Spleen (tissue), 13 donors: ENCODE measurements at regions of chr1 and their contacts with region 1.

Region 1: DNA sequence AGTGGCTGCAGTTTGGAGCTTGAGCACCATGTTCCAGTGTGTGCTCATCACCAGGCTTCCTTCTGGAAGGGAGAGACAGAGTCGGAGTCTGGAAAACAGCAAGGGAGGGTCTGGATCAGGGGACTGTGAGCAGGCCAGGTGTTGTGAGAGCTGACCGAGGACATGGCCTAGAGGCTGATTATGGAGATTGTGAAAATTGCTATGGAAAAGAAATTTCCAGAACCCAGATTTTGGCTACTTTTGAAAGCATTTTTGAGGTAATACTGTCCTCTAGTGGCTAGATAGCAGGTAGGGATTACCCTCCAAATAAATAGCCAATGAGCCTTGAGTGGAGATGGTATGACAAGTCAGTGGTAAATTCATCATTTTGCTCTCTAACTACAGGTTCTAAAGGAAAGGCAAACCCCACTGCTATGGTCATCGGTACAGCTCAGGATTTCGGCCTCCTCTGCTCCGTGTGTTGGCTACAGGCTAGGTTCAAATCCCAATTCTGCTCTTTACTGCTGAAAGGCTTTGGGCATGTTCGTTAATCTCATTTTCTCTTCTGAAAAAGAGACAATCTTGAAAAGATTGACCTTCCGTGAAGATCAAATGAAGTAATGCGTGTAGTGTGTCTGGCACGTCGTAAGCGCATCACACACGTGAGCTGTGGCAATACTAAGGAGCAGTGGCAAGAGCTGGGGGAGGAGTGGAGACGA is 1.0 kb upstream of the HAO2 start:
- DNase-seq: no peak
- H3K4me3 ChIP-seq: no peak overlapping the region
- H3K27ac ChIP-seq: no peak overlapping the region
- H3K4me1 ChIP-seq: no peaks in the 10 kb centered on the region
- H3K27me3 ChIP-seq: peaks cover 0 to 16% (median 0%) of the 10 kb centered on the region in 7 donors
- CTCF ChIP-seq: peak in 9 of 11 experiments; percentile 41 to 76 (median 62)
- POLR2A ChIP-seq: no peak

Region 2: GRCh38 chr1:119132179-119132578 is 235.4 kb before region 1 on chr1:
- intact Hi-C with region 1: no loop called
- DNase-seq: no peak
- H3K4me3 ChIP-seq: no peak overlapping the region
- H3K27ac ChIP-seq: no peak overlapping the region
- H3K4me1 ChIP-seq: no peaks in the 10 kb centered on the region
- H3K27me3 ChIP-seq: no peaks in the 10 kb centered on the region
- CTCF ChIP-seq: no peak
- POLR2A ChIP-seq: no peak

Region 3: GRCh38 chr1:119286587-119287181 is 80.9 kb before region 1 on chr1:
- intact Hi-C with region 1: loop called (anchors 10 kb)
- DNase-seq: no peak
- H3K4me3 ChIP-seq: no peak overlapping the region
- H3K27ac ChIP-seq: no peak overlapping the region
- H3K4me1 ChIP-seq: no peaks in the 10 kb centered on the region
- H3K27me3 ChIP-seq: no peaks in the 10 kb centered on the region
- CTCF ChIP-seq: peak in 9 of 11 experiments; percentile 23 to 67 (median 46)
- POLR2A ChIP-seq: no peak

Region 4: DNA sequence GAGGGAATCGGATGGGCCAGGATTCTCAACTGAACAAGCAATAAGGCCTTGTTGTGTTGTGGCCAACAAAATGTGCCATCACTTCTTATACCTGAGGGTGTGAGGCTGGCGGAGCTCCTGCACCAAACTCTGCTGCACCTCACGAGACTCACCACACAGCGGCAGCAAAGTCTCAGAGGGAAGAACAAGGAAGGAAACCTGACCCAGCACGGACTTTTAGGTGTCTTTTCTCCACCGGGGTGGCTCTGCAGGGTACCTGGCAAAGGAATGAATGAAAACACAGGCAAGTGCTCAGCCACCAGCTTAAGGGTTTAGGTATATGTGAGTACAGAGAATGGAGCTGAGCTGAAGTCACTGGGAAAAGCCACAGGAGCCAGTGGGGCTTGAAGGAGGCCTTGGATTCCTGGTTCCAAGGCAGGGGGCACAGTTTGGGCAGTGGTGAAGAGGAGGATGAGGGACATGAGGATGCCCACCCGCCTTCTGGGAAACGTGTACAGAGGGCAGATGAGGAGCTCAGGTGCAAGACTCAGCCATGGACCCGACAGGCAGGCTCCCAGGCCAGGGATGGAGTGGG is 108.4 kb after region 1 on chr1:
- intact Hi-C with region 1: no loop called
- DNase-seq: no peak
- H3K4me3 ChIP-seq: no peak overlapping the region
- H3K27ac ChIP-seq: no peak overlapping the region
- H3K4me1 ChIP-seq: no peaks in the 10 kb centered on the region
- H3K27me3 ChIP-seq: no peaks in the 10 kb centered on the region
- CTCF ChIP-seq: peak in 5 of 11 experiments; percentile 9 to 42 (median 31)
- POLR2A ChIP-seq: no peak